Caco-2 (cell line): ENCODE measurements at regions of chr2 and their contacts with region 1.

Region 1: GRCh38 chr2:57497489-57498096 is 549.0 kb upstream of the VRK2 start:
- DNase-seq: peak; percentile 52 to 70
- H3K4me3 ChIP-seq: no peak overlapping the region
- H3K4me3 Mint-ChIP-seq: no peak overlapping the region
- H3K27ac Mint-ChIP-seq: no peak overlapping the region
- H3K4me1 ChIP-seq: 0 out of 2 replicates have a peak, but pooled peaks cover 4% of the 10 kb centered on the region
- H3K4me1 Mint-ChIP-seq: no peaks in the 10 kb centered on the region
- H3K27me3 ChIP-seq: no peaks in the 10 kb centered on the region
- H3K27me3 Mint-ChIP-seq: no peaks in the 10 kb centered on the region
- CTCF ChIP-seq: peak; percentile 82 to 83

Region 2: GRCh38 chr2:56288838-56289580 is 1208.6 kb before region 1 on chr2:
- CTCF ChIA-PET with region 1: no interaction called
- POLR2A ChIA-PET with region 1: no interaction called
- intact Hi-C with region 1: loop called (anchors 5 kb)
- DNase-seq: peak in 1 of 2 experiments; percentile 2
- H3K4me3 ChIP-seq: no peak overlapping the region
- H3K4me3 Mint-ChIP-seq: no peak overlapping the region
- H3K27ac Mint-ChIP-seq: no peak overlapping the region
- H3K4me1 ChIP-seq: no peaks in the 10 kb centered on the region
- H3K4me1 Mint-ChIP-seq: peaks cover 5% of the 10 kb centered on the region
- H3K27me3 ChIP-seq: no peaks in the 10 kb centered on the region
- H3K27me3 Mint-ChIP-seq: peaks cover 11% of the 10 kb centered on the region
- CTCF ChIP-seq: peak in 1 of 2 experiments; percentile 52

Region 3: DNA sequence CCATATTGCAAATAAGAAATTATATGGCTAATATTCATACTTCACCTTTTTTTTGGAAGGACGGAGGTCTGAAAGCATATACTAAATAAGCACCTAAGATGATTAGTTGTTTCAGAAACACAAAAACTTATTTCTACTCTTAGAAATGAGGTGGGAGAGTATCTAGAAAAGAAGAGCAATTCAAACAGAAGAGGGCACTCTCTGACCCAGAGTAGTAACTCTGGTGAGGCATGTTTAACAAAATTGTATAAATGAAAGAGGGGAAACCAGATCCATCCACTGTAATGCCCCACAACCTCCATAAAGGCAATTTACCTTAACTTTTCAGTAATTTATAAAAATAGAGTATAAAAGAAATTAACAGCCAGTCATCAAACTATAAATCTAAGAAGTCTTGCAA is 120.6 kb before region 1 on chr2:
- CTCF ChIA-PET with region 1: no interaction called
- POLR2A ChIA-PET with region 1: no interaction called
- intact Hi-C with region 1: loop called (anchors 1 kb)
- DNase-seq: no peak
- H3K4me3 ChIP-seq: no peak overlapping the region
- H3K4me3 Mint-ChIP-seq: no peak overlapping the region
- H3K27ac Mint-ChIP-seq: no peak overlapping the region
- H3K4me1 ChIP-seq: peaks cover 34% of the 10 kb centered on the region
- H3K4me1 Mint-ChIP-seq: peaks cover 22% of the 10 kb centered on the region
- H3K27me3 ChIP-seq: no peaks in the 10 kb centered on the region
- H3K27me3 Mint-ChIP-seq: no peaks in the 10 kb centered on the region
- CTCF ChIP-seq: peak; percentile 1 to 30

Region 4: DNA sequence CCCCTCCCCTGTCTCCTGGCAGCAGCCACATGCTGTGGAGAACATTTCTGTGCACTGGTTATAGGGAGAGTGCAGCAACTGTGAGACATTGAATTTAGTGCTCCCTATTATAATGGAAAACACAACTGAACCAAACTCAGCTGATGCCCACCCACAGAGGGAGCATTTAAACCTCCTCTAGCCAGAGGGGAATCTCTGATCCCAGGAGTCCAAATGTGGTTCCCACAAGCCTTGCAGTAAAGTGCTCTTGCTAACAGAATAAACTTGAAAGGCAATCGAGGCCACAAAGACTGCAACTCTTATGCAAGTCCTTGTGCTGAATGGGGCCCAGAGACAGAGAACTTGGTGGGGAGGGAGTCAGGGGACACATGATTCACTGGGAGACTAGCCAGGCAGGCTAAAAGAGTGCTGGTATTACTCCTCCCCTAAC is 89.8 kb before region 1 on chr2:
- CTCF ChIA-PET with region 1: no interaction called
- POLR2A ChIA-PET with region 1: no interaction called
- intact Hi-C with region 1: no loop called
- DNase-seq: no peak
- H3K4me3 ChIP-seq: no peak overlapping the region
- H3K4me3 Mint-ChIP-seq: no peak overlapping the region
- H3K27ac Mint-ChIP-seq: no peak overlapping the region
- H3K4me1 ChIP-seq: no peaks in the 10 kb centered on the region
- H3K4me1 Mint-ChIP-seq: no peaks in the 10 kb centered on the region
- H3K27me3 ChIP-seq: no peaks in the 10 kb centered on the region
- H3K27me3 Mint-ChIP-seq: no peaks in the 10 kb centered on the region
- CTCF ChIP-seq: no peak

Region 5: DNA sequence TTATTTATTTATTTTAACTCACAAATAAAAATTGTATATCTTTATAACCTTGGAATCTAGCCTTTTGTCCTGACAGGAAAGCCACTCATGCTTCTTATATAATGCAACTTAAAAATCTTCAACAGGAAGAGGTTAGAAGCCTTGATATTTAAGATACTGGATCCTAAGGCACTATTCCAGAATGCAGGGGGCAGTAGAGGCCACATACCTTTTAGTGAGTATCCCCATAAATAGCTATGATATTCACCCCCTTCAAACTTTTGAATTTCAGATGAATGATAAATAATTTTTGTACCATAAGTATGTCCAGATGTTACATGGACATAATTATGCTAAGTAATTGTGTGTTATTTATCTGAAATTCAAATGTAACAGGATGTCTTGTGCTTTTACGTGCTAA is 43.6 kb before region 1 on chr2:
- CTCF ChIA-PET with region 1: no interaction called
- POLR2A ChIA-PET with region 1: no interaction called
- intact Hi-C with region 1: loop called (anchors 1 kb)
- DNase-seq: no peak
- H3K4me3 ChIP-seq: no peak overlapping the region
- H3K4me3 Mint-ChIP-seq: no peak overlapping the region
- H3K27ac Mint-ChIP-seq: no peak overlapping the region
- H3K4me1 ChIP-seq: peaks cover 9% of the 10 kb centered on the region; the same call in 1 of the 2 replicates
- H3K4me1 Mint-ChIP-seq: peaks cover 8% of the 10 kb centered on the region
- H3K27me3 ChIP-seq: no peaks in the 10 kb centered on the region
- H3K27me3 Mint-ChIP-seq: peaks cover 8% of the 10 kb centered on the region
- CTCF ChIP-seq: peak in 1 of 2 experiments; percentile 25

Region 6: DNA sequence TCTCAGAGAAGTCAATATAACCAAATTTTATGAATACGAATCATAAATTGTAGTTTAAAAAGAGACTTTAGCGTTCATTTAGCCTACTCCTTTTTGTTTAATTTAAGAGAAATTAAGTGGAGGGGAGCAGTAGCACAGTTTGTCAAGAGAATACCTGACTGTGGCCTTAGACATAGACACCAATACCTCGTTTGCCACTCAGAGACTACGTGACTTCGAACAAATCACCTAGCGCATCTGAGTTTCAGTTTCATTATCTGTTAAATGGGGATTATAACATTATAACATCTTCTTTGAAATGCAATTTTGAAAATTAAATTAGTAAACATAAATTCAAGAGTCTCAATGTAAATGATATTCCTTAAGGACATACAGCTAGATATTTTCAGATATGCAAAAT is 32.5 kb before region 1 on chr2:
- CTCF ChIA-PET with region 1: no interaction called
- POLR2A ChIA-PET with region 1: no interaction called
- intact Hi-C with region 1: no loop called
- DNase-seq: no peak
- H3K4me3 ChIP-seq: no peak overlapping the region
- H3K4me3 Mint-ChIP-seq: no peak overlapping the region
- H3K27ac Mint-ChIP-seq: no peak overlapping the region
- H3K4me1 ChIP-seq: no peaks in the 10 kb centered on the region
- H3K4me1 Mint-ChIP-seq: no peaks in the 10 kb centered on the region
- H3K27me3 ChIP-seq: no peaks in the 10 kb centered on the region
- H3K27me3 Mint-ChIP-seq: peaks cover 2% of the 10 kb centered on the region
- CTCF ChIP-seq: no peak